ENCODE measurements at regions of chr5 and their contacts with region 1.

Region 1: GRCh38 chr5:179858586-179859427 is at the start of gene MRNIP:
- DNase-seq: peak; percentile 96 to 97
- H3K4me3 ChIP-seq: peak within 1 kb of the TSS; percentile 100
- H3K4me3 Mint-ChIP-seq: peak within 1 kb of the TSS; percentile 84
- H3K27ac Mint-ChIP-seq: peak within 1 kb of the TSS; percentile 87
- H3K4me1 ChIP-seq: no peaks in the 10 kb centered on the region
- H3K4me1 Mint-ChIP-seq: no peaks in the 10 kb centered on the region
- H3K27me3 ChIP-seq: no peaks in the 10 kb centered on the region
- H3K27me3 Mint-ChIP-seq: no peaks in the 10 kb centered on the region
- CTCF ChIP-seq: peak in 1 of 2 experiments; percentile 25
- total RNA-seq, gene MRNIP: 37.8 and 43.0 TPM in 2 replicates

Region 2: DNA sequence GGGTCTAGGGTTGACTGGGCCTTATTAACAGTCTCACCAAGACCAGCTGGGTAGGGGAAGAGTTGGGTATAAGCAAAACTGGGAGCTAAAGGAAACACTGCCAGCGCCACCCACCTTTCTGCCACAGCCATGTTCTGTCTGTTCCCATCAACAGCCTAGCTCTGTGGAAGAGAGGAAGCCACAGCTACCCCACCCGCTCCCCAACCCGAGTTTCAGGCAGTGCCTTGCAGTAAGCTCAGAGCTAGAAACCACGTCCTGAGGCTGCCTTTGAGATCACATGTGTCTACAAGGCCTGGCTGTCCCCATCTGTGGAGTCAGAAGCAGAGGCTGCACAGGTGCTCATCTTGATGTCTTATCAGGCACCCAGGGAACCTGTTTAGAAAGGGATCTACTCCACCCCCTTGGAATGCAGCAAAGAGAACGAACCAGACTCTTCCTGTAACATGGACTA is 250.7 kb before region 1 on chr5:
- CTCF ChIA-PET with region 1: no interaction called
- POLR2A ChIA-PET with region 1: no interaction called
- intact Hi-C with region 1: no loop called
- DNase-seq: peak; percentile 66 to 77
- H3K4me3 ChIP-seq: no peak overlapping the region
- H3K4me3 Mint-ChIP-seq: no peak overlapping the region
- H3K27ac Mint-ChIP-seq: peak overlapping the region; percentile 66
- H3K4me1 ChIP-seq: peaks cover 10% of the 10 kb centered on the region
- H3K4me1 Mint-ChIP-seq: peaks cover 31% of the 10 kb centered on the region
- H3K27me3 ChIP-seq: no peaks in the 10 kb centered on the region
- H3K27me3 Mint-ChIP-seq: no peaks in the 10 kb centered on the region
- CTCF ChIP-seq: no peak

Region 3: DNA sequence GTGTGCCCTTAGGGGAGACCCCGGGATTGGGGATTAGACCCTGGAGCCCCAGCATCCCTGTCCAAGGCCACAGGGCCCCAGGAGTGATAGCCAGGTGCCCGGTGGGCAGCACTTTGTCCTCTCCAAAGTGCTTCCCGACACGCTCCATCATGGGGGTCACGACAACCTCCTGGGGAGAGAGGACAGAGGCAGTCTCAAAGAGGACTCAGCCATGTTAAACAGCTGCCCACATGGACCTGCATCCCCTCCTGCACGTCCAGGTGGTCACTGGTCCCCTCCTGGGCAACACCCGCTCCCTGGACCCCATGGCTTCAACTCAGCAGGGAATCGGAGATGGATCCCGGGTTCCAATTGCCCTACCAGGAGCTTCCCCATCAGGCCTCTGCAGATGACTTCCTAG is 215.3 kb before region 1 on chr5:
- CTCF ChIA-PET with region 1: no interaction called
- POLR2A ChIA-PET with region 1: no interaction called
- intact Hi-C with region 1: no loop called
- DNase-seq: no peak
- H3K4me3 ChIP-seq: no peak overlapping the region
- H3K4me3 Mint-ChIP-seq: no peak overlapping the region
- H3K27ac Mint-ChIP-seq: no peak overlapping the region
- H3K4me1 ChIP-seq: no peaks in the 10 kb centered on the region
- H3K4me1 Mint-ChIP-seq: no peaks in the 10 kb centered on the region
- H3K27me3 ChIP-seq: no peaks in the 10 kb centered on the region
- H3K27me3 Mint-ChIP-seq: no peaks in the 10 kb centered on the region
- CTCF ChIP-seq: no peak

Region 4: DNA sequence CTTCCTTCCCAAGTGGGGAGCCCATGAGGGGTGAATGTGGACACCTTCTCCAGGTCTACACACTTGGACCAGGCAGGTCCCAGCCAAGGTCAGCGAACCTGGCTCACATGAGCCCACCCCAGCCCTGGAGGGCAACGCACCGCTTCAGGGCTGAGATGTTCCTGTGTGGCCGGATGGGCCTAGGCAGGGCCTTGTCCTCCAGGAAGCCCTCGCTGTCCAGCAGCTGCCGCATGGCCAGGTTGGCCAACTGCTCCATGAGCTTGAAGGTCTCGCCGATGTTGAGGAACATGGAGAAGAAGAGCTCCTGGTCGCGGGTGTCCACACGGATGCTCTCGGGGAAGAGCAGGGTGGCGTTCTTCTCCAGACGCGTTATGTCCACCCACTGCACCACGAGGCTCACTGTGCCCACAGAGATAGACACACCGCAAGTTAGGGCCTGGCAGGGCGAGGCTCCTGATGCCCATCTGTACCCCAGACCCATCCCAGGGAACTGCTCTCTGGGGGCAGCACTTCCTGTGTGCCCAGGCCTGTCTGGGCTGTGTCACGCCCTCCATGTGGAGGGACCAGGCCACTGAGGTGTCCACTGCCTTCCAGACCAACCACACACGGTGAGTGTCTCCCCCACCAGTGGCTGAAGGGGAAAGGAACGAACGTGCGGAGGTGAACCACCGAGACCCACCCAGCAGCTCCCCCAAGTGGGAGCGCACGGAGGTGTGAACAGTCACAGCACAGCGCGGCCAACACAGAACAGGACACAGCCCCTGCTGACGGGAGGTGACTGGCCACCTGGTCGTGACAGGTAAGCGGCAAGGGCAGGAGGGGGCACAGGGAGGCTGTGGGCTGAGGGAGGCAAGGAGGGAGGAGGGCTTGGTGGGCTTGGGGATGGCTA is 34.5 kb after region 1 on chr5:
- CTCF ChIA-PET with region 1: no interaction called
- POLR2A ChIA-PET with region 1: no interaction called
- intact Hi-C with region 1: no loop called
- DNase-seq: no peak
- H3K4me3 ChIP-seq: no peak overlapping the region
- H3K4me3 Mint-ChIP-seq: no peak overlapping the region
- H3K27ac Mint-ChIP-seq: no peak overlapping the region
- H3K4me1 ChIP-seq: no peaks in the 10 kb centered on the region
- H3K4me1 Mint-ChIP-seq: no peaks in the 10 kb centered on the region
- H3K27me3 ChIP-seq: no peaks in the 10 kb centered on the region
- H3K27me3 Mint-ChIP-seq: no peaks in the 10 kb centered on the region
- CTCF ChIP-seq: no peak

Region 5: GRCh38 chr5:179907570-179908324 is 48.9 kb after region 1 on chr5 and contains the start of gene TBC1D9B:
- CTCF ChIA-PET with region 1: no interaction called
- POLR2A ChIA-PET with region 1: no interaction called
- intact Hi-C with region 1: loop called (anchors 5 kb)
- DNase-seq: peak in 1 of 2 experiments; percentile 73
- H3K4me3 ChIP-seq: peak within 1 kb of the TSS; percentile 76
- H3K4me3 Mint-ChIP-seq: peak within 1 kb of the TSS; percentile 82
- H3K27ac Mint-ChIP-seq: peak within 1 kb of the TSS; percentile 80
- H3K4me1 ChIP-seq: peaks cover 4% of the 10 kb centered on the region; the same call in 1 of the 2 replicates
- H3K4me1 Mint-ChIP-seq: peaks cover 6% of the 10 kb centered on the region
- H3K27me3 ChIP-seq: no peaks in the 10 kb centered on the region
- H3K27me3 Mint-ChIP-seq: no peaks in the 10 kb centered on the region
- CTCF ChIP-seq: peak; percentile 2 to 40
- total RNA-seq, gene TBC1D9B: 106 and 107 TPM in 2 replicates

Measured in Caco-2 (cell line).